Mammary epithelial cell (primary cell): ENCODE measurements at regions of chr12 and their contacts with region 1.

Region 1: GRCh38 chr12:110600254-110600653 is 13.7 kb upstream of the TCTN1 start:
- DNase-seq: peak; percentile 53
- H3K4me3 ChIP-seq: no peak overlapping the region
- H3K27ac ChIP-seq: no peak overlapping the region
- H3K4me1 ChIP-seq: no peaks in the 10 kb centered on the region
- H3K27me3 ChIP-seq: no peaks in the 10 kb centered on the region
- CTCF ChIP-seq: peak; percentile 13 to 42

Region 2: GRCh38 chr12:110004598-110004997 is 595.7 kb before region 1 on chr12:
- CTCF ChIA-PET with region 1: no interaction called
- dilution Hi-C with region 1: no loop called
- in situ Hi-C with region 1: no loop called
- intact Hi-C with region 1: no loop called
- DNase-seq: no peak
- H3K4me3 ChIP-seq: no peak overlapping the region
- H3K27ac ChIP-seq: no peak overlapping the region
- H3K4me1 ChIP-seq: peaks cover 30% of the 10 kb centered on the region
- H3K27me3 ChIP-seq: no peaks in the 10 kb centered on the region
- CTCF ChIP-seq: no peak

Region 3: GRCh38 chr12:110449799-110450497 is 150.3 kb before region 1 on chr12 and contains the start of gene ARPC3:
- CTCF ChIA-PET with region 1: interaction called, 4 read pairs
- dilution Hi-C with region 1: no loop called
- in situ Hi-C with region 1: no loop called
- intact Hi-C with region 1: loop called (anchors 1 kb)
- DNase-seq: peak; percentile 93
- H3K4me3 ChIP-seq: peak within 1 kb of the TSS; percentile 62 to 100 (median 94)
- H3K27ac ChIP-seq: peak within 1 kb of the TSS; percentile 61
- H3K4me1 ChIP-seq: no peaks in the 10 kb centered on the region
- H3K27me3 ChIP-seq: no peaks in the 10 kb centered on the region
- CTCF ChIP-seq: peak; percentile 80 to 95
- total RNA-seq, gene ARPC3: 290 to 318 TPM

Region 4: GRCh38 chr12:110508071-110508586 is 92.1 kb before region 1 on chr12:
- CTCF ChIA-PET with region 1: interaction called, 5 read pairs
- dilution Hi-C with region 1: no loop called
- in situ Hi-C with region 1: loop called (anchors 5 kb)
- intact Hi-C with region 1: loop called (anchors 1 kb)
- DNase-seq: no peak
- H3K4me3 ChIP-seq: no peak overlapping the region
- H3K27ac ChIP-seq: no peak overlapping the region
- H3K4me1 ChIP-seq: no peaks in the 10 kb centered on the region
- H3K27me3 ChIP-seq: no peaks in the 10 kb centered on the region
- CTCF ChIP-seq: no peak

Region 5: DNA sequence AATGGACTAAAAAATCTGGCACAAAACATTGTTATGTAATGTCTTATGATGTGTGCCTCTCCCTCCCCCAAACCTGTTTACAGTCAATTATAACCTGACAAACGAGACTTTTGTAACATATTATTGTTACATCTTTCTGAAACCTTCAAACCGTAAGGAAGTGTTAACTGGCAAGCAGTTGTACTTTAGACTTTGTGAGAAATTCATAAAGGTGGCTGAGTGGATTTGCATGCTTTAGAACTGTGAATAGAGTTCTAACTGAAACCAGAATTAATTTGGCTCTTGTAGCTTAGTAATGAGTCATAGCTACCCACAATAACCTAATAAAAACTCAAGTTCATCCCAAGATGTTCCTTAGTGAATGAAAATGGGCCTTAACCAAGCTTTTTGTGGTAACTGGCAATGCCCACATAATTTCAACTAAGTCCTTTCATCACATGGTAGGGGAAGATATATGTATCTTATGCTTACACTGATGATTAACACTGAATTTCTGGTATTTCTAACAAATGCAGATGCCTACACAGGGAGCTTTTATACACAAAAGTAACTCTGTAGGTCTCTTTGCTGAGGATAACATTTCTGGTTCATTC is 68.4 kb before region 1 on chr12:
- CTCF ChIA-PET with region 1: interaction called, 5 read pairs
- dilution Hi-C with region 1: loop called (anchors 5 kb)
- in situ Hi-C with region 1: no loop called
- intact Hi-C with region 1: no loop called
- DNase-seq: peak; percentile 88
- H3K4me3 ChIP-seq: no peak overlapping the region
- H3K27ac ChIP-seq: peak overlapping the region; percentile 52
- H3K4me1 ChIP-seq: peaks cover 27% of the 10 kb centered on the region
- H3K27me3 ChIP-seq: no peaks in the 10 kb centered on the region
- CTCF ChIP-seq: no peak

Region 6: GRCh38 chr12:110555577-110556406 is 44.5 kb before region 1 on chr12:
- CTCF ChIA-PET with region 1: no interaction called
- dilution Hi-C with region 1: no loop called
- in situ Hi-C with region 1: loop called in 1 of 2 experiments (anchors 5 kb)
- intact Hi-C with region 1: loop called (anchors 1 kb)
- DNase-seq: peak; percentile 76
- H3K4me3 ChIP-seq: peak overlapping the region; percentile 9 to 26 (median 20)
- H3K27ac ChIP-seq: peak overlapping the region; percentile 90
- H3K4me1 ChIP-seq: peaks cover 25% of the 10 kb centered on the region
- H3K27me3 ChIP-seq: no peaks in the 10 kb centered on the region
- CTCF ChIP-seq: no peak

Region 7: GRCh38 chr12:110826592-110827200 is 226.4 kb after region 1 on chr12:
- CTCF ChIA-PET with region 1: no interaction called
- dilution Hi-C with region 1: no loop called
- in situ Hi-C with region 1: no loop called
- intact Hi-C with region 1: loop called (anchors 1 kb)
- DNase-seq: peak; percentile 80
- H3K4me3 ChIP-seq: no peak overlapping the region
- H3K27ac ChIP-seq: no peak overlapping the region
- H3K4me1 ChIP-seq: no peaks in the 10 kb centered on the region
- H3K27me3 ChIP-seq: no peaks in the 10 kb centered on the region
- CTCF ChIP-seq: peak; percentile 80 to 83

Region 8: DNA sequence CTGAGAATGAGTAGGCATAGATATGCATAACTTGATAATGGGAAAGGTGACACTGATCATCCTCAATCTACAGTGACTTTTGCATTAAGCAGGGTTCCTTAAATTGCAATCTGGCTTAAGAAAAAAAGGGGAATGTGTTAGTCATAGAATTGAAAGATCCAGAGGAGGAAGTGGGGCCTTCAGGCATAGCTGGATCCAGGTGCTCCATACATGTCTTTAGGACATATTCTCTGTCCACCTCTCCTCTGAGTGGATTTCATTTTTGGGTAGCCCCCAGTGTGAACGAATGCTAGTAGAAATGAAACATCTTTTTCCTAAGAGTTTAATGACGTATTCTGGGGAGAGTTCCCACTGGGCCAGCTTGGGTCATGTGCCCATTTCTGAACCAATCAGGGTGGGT is 274.1 kb after region 1 on chr12:
- CTCF ChIA-PET with region 1: no interaction called
- dilution Hi-C with region 1: no loop called
- in situ Hi-C with region 1: no loop called
- intact Hi-C with region 1: no loop called
- DNase-seq: no peak
- H3K4me3 ChIP-seq: no peak overlapping the region
- H3K27ac ChIP-seq: no peak overlapping the region
- H3K4me1 ChIP-seq: no peaks in the 10 kb centered on the region
- H3K27me3 ChIP-seq: no peaks in the 10 kb centered on the region
- CTCF ChIP-seq: no peak